ENCODE measurements at regions of chrX and their contacts with region 1.

Region 1: DNA sequence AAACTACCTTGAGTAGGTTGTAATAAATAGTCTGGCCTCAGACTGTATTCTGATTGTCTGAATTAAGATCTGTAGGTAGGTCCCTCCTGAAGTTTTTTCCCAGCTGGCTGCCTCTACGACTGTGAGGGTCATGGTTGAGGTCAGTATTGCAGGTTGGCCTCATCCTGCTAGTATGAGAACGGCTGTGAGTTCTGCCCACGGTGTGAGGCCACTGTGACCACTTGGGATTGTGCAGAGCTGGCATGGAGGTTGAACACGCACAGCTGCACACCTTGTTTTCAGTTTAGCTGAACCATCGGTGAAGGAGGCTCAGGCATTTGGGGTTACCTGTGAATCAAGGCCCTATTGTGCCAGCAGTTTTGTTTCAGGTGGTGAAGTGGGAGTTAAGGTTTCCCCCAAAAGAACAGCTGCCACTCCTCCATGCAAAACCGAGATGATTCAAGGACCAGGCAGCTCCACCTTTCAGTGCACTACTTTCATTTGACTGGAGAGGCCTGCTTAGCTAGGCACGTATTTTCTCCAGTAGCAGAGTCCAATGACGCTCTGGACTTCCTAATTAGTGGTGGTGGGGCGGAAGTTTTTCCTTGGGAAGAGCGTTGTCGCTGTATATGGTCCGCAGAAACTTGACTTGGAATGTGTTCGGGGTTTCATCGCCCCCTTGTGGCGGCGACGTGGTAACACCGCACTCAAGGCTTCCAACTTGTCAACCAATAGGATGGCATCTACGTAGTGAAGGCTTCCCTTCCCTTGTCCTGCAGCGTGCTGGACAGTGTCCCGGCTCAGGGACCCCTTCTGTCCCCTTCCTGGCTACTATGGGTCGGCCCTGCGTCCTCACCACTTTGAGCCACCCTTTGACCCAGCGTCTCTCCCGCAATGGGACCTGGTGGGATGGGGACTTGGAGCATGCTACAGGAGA is 13.8 kb downstream of the CMC4 start:
- DNase-seq: peak; percentile 43 to 82
- ATAC-seq: peak; percentile 93 to 97
- H3K4me3 ChIP-seq: peak overlapping the region; percentile 25; the same call in 1 of the 3 replicates
- H3K27ac ChIP-seq: peak overlapping the region; percentile 8 to 69; a peak in 3 of 6 replicates
- H3K4me1 ChIP-seq: peaks cover 27% of the 10 kb centered on the region
- CTCF ChIP-seq: peak; percentile 77
- EP300 ChIP-seq: no peak
- POLR2A ChIP-seq: no peak
- RAD21 ChIP-seq: peak; percentile 69 to 71; a peak in 4 of 5 replicates

Region 2: DNA sequence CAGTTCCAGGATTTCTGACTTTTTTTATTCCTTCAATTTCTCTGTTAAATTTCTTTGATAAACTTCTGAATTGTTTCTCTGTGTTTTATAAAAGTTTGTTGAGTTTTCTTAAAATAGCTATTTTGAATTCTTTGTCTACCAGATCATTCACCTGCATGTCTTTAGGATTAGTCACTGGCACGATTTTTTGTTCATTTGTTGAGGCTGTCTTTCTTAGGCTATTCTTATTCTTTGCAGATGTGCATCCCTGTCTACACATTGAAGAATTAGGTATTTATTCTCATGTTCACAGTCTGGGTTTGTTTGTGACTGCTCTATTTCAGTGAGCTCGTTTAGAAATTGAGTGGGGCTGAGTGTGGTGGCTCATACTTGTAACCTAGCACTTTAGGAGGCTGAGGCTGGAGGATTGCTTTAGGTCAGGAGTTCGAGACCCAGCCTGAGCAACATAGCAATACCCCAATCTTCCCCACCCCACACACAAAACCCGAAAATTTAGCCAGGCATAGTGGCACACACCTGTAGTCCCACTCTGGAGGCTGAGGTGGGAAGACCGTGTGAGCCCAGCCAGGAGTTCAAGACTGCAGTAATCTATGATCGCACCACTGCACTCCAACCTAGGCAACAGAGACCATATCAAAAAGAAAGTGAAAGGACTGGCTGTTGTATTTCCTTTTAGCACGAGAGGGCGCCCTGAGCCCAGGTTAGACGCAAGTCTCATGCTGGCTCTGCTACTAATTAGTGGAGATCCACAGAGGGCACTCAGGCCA is 76.6 kb before region 1 on chrX:
- CTCF ChIA-PET with region 1: interaction called, 35 read pairs
- POLR2A ChIA-PET with region 1: no interaction called
- DNase-seq: peak; percentile 48 to 70
- ATAC-seq: peak; percentile 93 to 97
- H3K4me3 ChIP-seq: peak overlapping the region; percentile 35
- H3K27ac ChIP-seq: peak overlapping the region; percentile 43 to 76; a peak in 3 of 6 replicates
- H3K4me1 ChIP-seq: no peaks in the 10 kb centered on the region
- CTCF ChIP-seq: peak; percentile 87
- EP300 ChIP-seq: no peak
- POLR2A ChIP-seq: no peak
- RAD21 ChIP-seq: peak; percentile 94 to 96

Region 3: GRCh38 chrX:154986826-154987576 is 70.1 kb before region 1 on chrX:
- CTCF ChIA-PET with region 1: interaction called, 35 read pairs
- POLR2A ChIA-PET with region 1: no interaction called
- DNase-seq: peak in 1 of 2 experiments; percentile 33
- ATAC-seq: 0 out of 6 replicates have a peak, but pooled peaks of 1 of the 2 experiments have one; percentile 35
- H3K4me3 ChIP-seq: no peak overlapping the region
- H3K27ac ChIP-seq: no peak overlapping the region
- H3K4me1 ChIP-seq: peaks cover 10% of the 10 kb centered on the region; the same call in 1 of the 3 replicates
- CTCF ChIP-seq: peak; percentile 42
- EP300 ChIP-seq: no peak
- POLR2A ChIP-seq: no peak
- RAD21 ChIP-seq: peak; percentile 54 to 61; a peak in 4 of 5 replicates

Region 4: GRCh38 chrX:155046129-155046810 is 10.9 kb before region 1 on chrX:
- CTCF ChIA-PET with region 1: interaction called, 19 read pairs
- POLR2A ChIA-PET with region 1: no interaction called
- DNase-seq: no peak
- ATAC-seq: no peak
- H3K4me3 ChIP-seq: no peak overlapping the region
- H3K27ac ChIP-seq: no peak overlapping the region
- H3K4me1 ChIP-seq: peaks cover 11% of the 10 kb centered on the region; the same call in 2 of the 3 replicates
- CTCF ChIP-seq: no peak
- EP300 ChIP-seq: no peak
- POLR2A ChIP-seq: no peak
- RAD21 ChIP-seq: no peak

Region 5: GRCh38 chrX:155068165-155068564 is 11.0 kb after region 1 on chrX:
- CTCF ChIA-PET with region 1: interaction called, 11 read pairs
- POLR2A ChIA-PET with region 1: no interaction called
- DNase-seq: peak; percentile 41 to 60
- ATAC-seq: peak; percentile 40 to 49; a peak in 5 of 6 replicates
- H3K4me3 ChIP-seq: no peak overlapping the region
- H3K27ac ChIP-seq: peak overlapping the region; percentile 93 to 98; a peak in 5 of 6 replicates
- H3K4me1 ChIP-seq: peaks cover 63% of the 10 kb centered on the region
- CTCF ChIP-seq: no peak
- EP300 ChIP-seq: no peak
- POLR2A ChIP-seq: no peak
- RAD21 ChIP-seq: no peak

Region 6: DNA sequence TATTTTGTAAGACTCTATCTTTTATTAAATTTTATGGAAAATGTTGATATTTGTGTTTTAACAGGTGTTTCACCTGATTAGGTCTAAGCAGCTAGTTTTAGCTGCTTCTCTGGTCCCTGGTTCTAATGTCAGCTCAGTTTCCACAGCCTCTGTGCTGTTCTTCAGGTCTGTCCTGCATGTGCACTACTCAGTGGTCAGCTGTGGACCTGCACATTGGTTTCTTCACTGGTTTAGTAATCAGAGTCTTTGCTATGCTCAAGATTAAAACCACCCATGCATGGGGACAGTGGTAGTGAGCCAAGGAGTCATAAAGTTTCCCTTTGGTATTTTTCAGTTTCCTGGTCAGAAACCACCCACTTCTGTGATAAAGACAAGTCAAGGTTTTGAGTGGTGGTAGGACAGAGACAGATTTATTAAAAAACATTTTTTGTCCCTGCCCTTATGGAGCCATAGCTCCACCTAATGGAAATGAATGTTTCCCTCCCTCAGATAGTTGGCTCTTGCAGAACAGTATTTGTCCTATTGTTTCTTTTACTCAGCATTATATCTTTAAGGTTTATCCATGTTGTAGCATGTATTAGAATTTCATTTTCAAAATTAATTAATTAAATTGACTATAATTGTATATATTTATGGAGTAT is 122.3 kb after region 1 on chrX:
- CTCF ChIA-PET with region 1: no interaction called
- POLR2A ChIA-PET with region 1: no interaction called
- DNase-seq: no peak
- ATAC-seq: peak in 1 of 2 experiments; percentile 30; a peak in 1 of 6 replicates
- H3K4me3 ChIP-seq: no peak overlapping the region
- H3K27ac ChIP-seq: no peak overlapping the region
- H3K4me1 ChIP-seq: no peaks in the 10 kb centered on the region
- CTCF ChIP-seq: no peak
- EP300 ChIP-seq: no peak
- POLR2A ChIP-seq: no peak
- RAD21 ChIP-seq: peak in 1 of 2 experiments; percentile 19; a peak in 1 of 5 replicates

Measured in A549 (cell line).